ENCODE measurements at regions of chr20 and their contacts with region 1.

Region 1: GRCh38 chr20:17093782-17094181 is 133.1 kb upstream of the PCSK2 start:
- DNase-seq: no peak

Region 2: DNA sequence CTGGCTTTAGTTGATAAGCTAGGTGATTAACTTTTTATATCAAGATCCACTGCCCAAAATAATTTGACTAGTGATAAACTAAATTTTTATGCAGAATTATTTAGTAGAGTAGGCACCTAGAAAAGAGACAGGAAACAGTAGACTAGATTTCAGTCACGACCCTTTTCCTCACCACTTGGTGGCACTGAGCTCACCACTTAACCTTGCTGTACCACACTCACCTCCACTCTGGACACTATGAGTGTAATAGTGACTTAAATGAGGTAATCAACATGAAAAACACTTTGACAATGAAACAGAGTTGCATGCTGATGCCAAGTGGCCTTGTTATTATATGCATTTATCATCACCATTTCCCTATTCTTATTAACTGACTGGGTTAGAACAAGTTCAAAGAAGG is 1250.9 kb before region 1 on chr20:
- intact Hi-C with region 1: loop called in 1 of 2 experiments (anchors 5 kb)
- DNase-seq: no peak

Measured in posterior vena cava (tissue), 2 donors.